ENCODE measurements at regions of chr1 and their contacts with region 1.

Region 1: GRCh38 chr1:153880962-153881361 is 41.8 kb downstream of the GATAD2B start:
- DNase-seq: peak; percentile 92

Region 2: DNA sequence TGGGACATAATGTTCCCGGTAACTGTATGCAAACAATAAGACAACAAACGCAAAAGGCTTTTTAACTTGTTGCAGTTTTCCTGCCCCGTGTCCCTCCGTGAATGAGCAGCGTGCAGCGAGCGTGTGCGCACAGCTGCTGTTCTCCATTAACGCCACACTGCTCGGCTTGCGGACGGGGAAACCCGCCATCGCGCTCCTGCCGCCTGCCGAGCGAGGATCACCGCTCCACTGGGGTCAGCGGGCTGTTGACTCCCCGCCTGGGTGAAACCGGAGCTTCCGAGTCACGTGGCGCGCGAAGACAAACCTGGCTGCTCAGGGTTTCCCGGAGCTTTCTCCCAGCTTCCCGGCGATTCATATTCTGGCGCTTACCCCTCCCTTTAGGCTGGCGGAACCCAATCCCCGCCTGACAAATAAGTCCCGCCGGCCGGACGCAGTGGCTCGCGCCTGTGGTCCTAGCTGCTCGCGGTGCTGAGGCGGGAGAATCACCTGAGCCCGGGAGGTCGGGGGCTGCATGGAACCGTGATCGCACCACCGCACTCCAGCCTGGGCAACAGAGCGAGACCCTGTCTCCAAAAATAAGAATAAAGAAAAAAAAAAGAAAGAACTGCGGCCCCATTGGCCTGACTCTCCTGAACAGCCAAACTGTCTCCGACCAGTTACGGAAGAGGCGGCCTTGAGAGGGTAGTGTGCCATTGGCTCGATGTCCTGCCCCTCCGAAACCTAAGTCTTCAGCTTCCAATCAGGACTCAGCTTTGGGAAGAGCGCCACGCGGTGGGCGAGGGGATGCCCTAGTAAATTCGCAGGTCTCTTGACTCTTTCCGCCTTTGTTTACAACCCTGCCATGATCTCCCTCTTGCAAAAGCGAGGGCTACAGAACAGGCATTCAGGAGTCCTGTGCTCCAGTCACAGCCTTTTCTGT is 86.4 kb after region 1 on chr1 and contains the start of gene CREB3L4:
- intact Hi-C with region 1: loop called (anchors 5 kb)
- DNase-seq: peak; percentile 95
- total RNA-seq, gene CREB3L4: 3.8 TPM

Measured in cardiac septum (tissue), 1 donor.